Activated naive CD4-positive, alpha-beta T cell treated with anti-CD3 and anti-CD28 coated beads for 36 hours (primary cell): ENCODE measurements at regions of chr11 and their contacts with region 1.

Region 1: DNA sequence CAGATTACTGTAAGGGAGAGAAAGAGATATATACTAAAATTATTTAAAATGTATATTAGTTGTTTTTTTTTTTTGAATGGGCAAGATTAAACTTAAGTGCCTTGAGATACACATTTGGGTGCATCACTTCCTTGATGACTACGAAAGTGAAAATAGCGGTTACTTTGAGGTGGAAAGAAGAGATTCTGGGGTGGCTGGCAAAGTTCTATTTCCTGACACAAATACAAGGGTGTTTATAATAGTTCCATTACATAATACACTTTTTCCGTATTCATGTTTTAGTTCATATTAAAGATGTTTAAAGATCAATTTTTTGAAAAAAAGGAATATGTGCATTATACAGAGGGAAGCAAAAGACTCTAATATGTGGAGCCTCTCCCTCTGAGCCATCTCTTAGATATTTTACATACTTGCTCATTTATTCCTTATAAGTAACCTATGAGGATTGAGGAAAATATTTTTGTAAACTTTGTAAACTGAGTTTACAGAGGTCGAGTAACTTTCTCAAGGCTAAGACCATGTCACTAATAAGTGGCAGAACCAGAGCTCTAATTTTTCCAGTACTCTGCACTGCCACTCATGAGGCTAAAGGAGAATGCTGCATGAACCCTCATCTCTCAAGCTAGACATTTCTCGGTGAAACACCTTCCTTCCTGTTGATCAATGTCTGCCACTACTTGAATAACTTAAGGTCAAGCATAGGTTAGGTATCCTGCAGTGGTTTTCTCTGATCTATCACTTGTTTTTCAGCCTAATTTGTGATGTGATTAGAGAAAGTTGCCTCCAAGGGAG is 58.6 kb downstream of the DDIAS start:
- DNase-seq: peak; percentile 55
- H3K4me3 Mint-ChIP-seq: peak overlapping the region; percentile 21
- H3K27ac Mint-ChIP-seq: peak overlapping the region; percentile 68
- H3K4me1 Mint-ChIP-seq: peaks cover 82% of the 10 kb centered on the region
- H3K27me3 Mint-ChIP-seq: no peaks in the 10 kb centered on the region

Region 2: GRCh38 chr11:82889133-82890001 is 70.8 kb before region 1 on chr11:
- CTCF ChIA-PET with region 1: no interaction called
- intact Hi-C with region 1: no loop called
- DNase-seq: no peak
- H3K4me3 Mint-ChIP-seq: no peak overlapping the region
- H3K27ac Mint-ChIP-seq: no peak overlapping the region
- H3K4me1 Mint-ChIP-seq: peaks cover 4% of the 10 kb centered on the region
- H3K27me3 Mint-ChIP-seq: no peaks in the 10 kb centered on the region

Region 3: DNA sequence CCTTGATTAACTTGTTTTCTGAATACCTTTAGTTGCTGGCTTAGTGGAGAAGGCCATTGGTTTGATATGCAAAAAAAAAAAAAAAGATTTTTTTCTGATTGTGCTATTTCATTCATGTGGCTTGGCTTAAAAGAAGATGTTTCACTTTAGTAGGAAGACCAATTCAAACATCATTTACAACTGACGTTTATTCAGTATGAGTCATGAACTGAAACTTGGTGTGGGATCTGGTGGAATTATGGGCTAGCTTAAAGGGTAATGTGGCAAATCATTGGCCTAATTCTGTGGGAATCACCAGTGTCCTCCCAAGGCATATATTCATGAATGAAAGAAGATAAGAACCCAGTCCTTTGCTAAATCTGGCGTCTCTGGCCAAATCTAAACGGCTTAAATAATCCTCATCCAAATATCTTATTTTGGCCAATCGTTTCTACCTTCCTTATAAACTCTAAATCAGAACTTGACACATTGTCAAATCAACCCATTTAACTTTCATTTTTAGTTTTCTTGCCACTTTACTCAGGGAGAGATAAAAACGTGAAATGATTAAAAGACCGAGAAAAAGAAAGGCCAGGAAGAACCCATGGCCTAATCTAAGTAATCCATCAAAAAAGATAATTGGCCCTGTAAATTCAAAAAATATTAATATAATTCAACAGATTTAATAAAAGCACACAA is 18.4 kb after region 1 on chr11:
- CTCF ChIA-PET with region 1: interaction called, 3 read pairs
- intact Hi-C with region 1: loop called (anchors 1 kb)
- DNase-seq: no peak
- H3K4me3 Mint-ChIP-seq: peak overlapping the region; percentile 0
- H3K27ac Mint-ChIP-seq: peak overlapping the region; percentile 33
- H3K4me1 Mint-ChIP-seq: peaks cover 51% of the 10 kb centered on the region
- H3K27me3 Mint-ChIP-seq: no peaks in the 10 kb centered on the region

Region 4: GRCh38 chr11:83063073-83063754 is 103.0 kb after region 1 on chr11:
- CTCF ChIA-PET with region 1: no interaction called
- intact Hi-C with region 1: loop called (anchors 1 kb)
- DNase-seq: no peak
- H3K4me3 Mint-ChIP-seq: peak overlapping the region; percentile 78
- H3K27ac Mint-ChIP-seq: peak overlapping the region; percentile 93
- H3K4me1 Mint-ChIP-seq: peaks cover 64% of the 10 kb centered on the region
- H3K27me3 Mint-ChIP-seq: no peaks in the 10 kb centered on the region